BJ (cell line): ENCODE measurements at regions of chr11 and their contacts with region 1.

Region 1: DNA sequence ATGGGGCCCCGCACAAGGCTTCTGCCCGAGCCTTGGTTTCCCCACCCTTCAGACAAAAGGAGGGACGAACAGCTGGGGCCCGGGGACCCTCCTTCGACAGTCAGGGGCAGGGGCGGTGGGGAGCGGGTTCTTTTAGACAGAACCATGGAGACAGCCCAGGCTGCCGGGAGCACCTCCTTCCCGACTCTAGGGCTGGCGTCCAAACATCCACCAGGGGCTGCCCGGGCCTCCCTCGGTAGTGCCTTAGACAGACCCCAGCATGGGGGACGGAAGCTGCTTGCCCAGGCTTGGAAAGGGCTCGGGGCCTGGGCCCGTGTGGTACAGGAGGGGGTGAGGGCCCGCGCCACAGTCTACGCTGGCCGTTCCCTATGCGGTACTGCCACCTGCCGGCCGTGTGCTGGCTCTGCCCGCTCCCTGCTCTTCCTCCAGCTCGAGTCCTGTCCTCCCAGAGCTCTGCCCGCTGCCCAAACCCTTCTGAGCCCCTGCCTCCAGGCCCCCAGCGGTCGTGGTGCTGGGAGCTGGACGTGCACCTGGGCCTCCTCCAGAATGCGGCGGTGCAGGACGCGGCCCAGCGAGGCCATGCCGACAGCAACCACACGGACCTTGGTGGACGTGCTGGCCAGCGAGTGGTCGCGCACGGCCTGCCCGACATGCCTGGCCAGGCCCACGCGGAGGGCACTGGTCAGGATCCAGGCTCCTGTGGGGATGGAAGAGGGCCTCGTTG is 20.1 kb downstream of the TSSC4 start:
- DNase-seq: no peak
- H3K4me3 ChIP-seq: no peak overlapping the region
- H3K27me3 ChIP-seq: no peaks in the 10 kb centered on the region
- CTCF ChIP-seq: peak; percentile 95

Region 2: DNA sequence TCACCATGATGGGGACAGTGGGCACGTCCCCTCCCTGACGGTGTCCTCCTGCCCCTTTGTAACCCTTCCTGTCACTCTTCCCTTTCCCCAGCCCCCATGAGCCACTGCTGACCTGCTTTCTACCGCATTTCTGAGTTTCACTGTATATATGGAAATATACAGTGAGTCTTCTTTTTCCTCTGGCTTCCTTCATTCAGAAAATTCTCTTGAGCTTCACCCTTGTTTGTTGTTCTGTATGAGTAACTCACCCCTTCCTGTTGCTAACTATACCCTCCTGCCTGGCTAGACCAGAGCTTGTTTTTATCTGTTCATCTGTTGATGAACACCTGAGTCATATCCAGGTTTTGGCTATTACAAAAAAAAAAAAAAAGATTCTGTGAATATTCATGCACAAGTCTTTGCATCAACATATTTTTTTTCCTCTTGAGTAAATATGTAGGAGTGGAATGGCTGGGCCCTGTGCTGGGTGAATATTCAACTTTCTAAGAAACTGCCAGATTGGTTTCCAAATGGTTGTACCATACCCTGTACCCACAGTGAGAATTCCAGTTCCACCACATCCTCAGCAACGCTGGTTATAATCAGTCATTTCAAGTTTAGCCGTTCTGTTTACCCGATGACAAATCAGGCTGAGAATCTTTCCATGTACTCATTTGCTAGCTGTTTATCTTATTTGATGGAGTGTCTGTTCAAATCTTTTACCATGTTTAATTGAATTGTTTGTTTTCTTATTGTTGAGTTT is 343.4 kb before region 1 on chr11:
- CTCF ChIA-PET with region 1: no interaction called
- POLR2A ChIA-PET with region 1: no interaction called
- DNase-seq: peak; percentile 33
- H3K4me3 ChIP-seq: no peak overlapping the region
- H3K27me3 ChIP-seq: peaks cover 2% of the 10 kb centered on the region
- CTCF ChIP-seq: no peak

Region 3: DNA sequence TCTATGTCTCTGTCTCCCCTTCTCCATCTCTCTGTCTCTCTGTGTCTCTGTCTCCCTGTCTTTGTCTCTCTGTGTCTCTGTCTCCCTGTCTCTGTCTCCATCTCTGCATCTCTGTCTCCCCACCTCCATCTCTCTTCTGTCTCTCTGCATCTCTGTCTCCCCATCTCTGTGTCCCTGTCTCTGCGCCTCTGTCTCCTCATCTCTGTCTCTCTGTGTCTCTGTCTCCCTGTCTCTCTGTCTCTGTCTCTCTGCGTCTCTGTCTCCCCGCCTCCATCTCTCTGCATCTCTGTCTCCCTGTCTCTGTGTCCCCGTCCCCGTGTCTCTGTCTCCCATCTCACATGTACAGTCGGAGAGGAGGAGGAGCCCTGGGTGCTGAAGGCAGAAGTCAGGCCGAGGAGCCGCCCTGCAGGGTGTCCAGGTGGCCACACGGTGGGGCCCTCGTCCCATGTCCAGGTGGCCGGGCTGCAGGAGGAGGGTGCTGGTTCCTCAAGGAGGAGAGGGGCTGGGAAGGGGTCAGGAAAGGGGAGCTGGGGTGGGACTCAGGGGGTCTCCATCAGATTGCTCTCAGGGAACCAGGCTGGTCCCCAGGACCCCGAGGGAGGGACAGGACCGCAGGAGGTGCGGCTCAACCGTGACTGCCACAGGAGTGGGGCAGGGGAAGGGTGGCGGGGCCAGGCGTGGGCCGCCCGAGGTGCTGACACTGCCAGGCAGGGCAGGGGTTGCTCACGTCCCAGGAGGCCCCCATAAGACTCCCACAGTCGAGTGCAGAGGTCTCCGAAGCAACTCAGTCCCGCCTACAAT is 223.5 kb before region 1 on chr11:
- CTCF ChIA-PET with region 1: interaction called, 122 read pairs
- POLR2A ChIA-PET with region 1: no interaction called
- DNase-seq: no peak
- H3K4me3 ChIP-seq: no peak overlapping the region
- H3K27me3 ChIP-seq: no peaks in the 10 kb centered on the region
- CTCF ChIP-seq: peak; percentile 94

Region 4: GRCh38 chr11:2290351-2290841 is 130.3 kb before region 1 on chr11:
- CTCF ChIA-PET with region 1: interaction called, 16 read pairs
- POLR2A ChIA-PET with region 1: no interaction called
- DNase-seq: no peak
- H3K4me3 ChIP-seq: no peak overlapping the region
- H3K27me3 ChIP-seq: peaks cover 2% of the 10 kb centered on the region
- CTCF ChIP-seq: no peak

Region 5: DNA sequence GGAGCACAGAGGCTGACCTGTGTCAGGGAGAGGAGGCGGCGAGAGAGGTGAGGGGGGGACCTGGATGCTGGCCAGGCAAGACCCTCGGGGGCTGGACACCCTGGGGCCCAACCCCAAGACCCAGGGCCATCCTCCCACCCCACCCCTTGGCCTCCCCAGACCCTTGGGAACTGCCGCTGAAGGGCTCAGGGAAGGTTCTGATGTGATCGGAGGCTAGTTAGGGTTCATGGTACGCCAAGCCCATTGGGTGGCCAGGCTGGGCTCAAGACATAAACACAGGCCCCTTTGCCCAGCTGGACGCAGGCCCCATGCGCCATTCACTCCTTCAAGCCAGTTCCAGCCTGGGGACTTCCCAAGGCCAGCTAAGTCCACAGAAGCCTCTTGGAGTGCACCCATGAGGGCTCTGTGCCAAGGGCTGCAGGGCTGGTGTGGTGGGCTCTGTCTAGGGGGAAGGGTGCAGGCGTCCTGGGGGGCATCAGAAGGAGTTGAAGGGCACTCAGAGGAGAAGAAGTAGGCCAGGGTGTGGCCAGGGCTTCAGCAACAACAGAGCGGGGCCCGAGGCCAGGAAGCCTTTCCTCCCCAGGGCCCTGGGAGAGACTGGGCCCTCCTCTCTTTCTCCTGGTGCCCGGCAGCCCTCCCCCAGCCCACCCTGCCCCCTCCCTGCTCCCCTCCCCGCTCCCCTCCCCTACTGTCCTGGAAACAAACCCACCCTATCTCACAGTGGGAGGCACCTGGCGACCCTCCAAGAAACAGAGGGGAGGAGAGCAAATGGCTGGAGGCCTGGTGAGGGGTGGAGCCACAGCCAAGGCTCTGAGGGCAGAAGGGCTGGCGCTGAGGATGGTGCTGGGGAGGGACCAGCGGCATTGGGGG is 105.9 kb before region 1 on chr11:
- CTCF ChIA-PET with region 1: interaction called, 46 read pairs
- POLR2A ChIA-PET with region 1: no interaction called
- DNase-seq: no peak
- H3K4me3 ChIP-seq: no peak overlapping the region
- H3K27me3 ChIP-seq: no peaks in the 10 kb centered on the region
- CTCF ChIP-seq: no peak

Region 6: DNA sequence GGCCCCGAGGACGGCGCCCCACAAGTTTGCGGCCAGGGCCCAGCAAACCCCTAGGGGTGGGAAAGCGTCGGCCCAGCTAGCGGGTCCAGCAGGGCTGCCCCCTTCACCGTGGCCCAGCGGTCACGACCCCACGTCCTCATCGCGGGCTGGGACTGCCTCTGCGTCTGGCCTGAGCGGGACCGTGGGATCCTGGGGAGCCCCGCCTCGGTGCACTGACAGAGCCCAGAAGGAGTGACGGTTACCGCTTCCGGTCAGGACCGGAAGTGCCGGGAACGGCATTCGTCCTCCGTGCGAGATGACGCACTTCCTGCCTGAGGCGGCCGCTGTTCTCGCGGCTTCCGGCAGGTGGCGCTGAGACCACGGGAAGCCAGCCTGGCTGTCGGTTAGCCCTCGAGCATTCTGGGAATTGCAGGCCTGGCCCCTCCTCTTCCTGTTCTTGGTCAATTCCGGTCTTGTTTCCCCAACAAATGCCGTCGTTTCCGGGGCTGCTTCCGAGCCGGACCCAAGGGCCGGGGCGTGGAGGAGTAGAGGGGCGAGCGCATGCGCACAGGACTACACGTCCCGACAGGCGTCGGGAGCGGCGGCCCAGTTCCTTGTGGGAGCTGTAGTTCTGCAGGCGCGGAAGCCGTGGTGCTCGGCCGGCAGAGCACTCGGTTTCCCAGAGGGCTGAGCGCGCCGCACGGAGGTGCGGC is 20.4 kb before region 1 on chr11 and contains the start of gene TSSC4:
- CTCF ChIA-PET with region 1: interaction called, 34 read pairs
- POLR2A ChIA-PET with region 1: interaction called, 3 read pairs
- DNase-seq: peak; percentile 100
- H3K4me3 ChIP-seq: peak within 1 kb of the TSS; percentile 100
- H3K27me3 ChIP-seq: no peaks in the 10 kb centered on the region
- CTCF ChIP-seq: peak; percentile 99
- polyA plus RNA-seq, gene TSSC4: 16.3 and 30.5 TPM in 2 replicates

Region 7: GRCh38 chr11:2532704-2533586 is 112.3 kb after region 1 on chr11:
- CTCF ChIA-PET with region 1: interaction called, 90 read pairs
- POLR2A ChIA-PET with region 1: no interaction called
- DNase-seq: peak; percentile 13
- H3K4me3 ChIP-seq: no peak overlapping the region
- H3K27me3 ChIP-seq: peaks cover 2% of the 10 kb centered on the region; the same call in 1 of the 2 replicates
- CTCF ChIP-seq: peak; percentile 96